Activated CD8-positive, alpha-beta memory T cell treated with anti-CD3 and anti-CD28 coated beads, Interleukin-2, amount 10 ng/mL, durations not matched to agents 7 days and 5 days (primary cell): ENCODE measurements at regions of chr19 and their contacts with region 1.

Region 1: GRCh38 chr19:35882114-35882832 is 13.9 kb downstream of the APLP1 start:
- DNase-seq: peak; percentile 53
- ATAC-seq: peak; percentile 37
- H3K4me3 Mint-ChIP-seq: no peak overlapping the region
- H3K27ac Mint-ChIP-seq: no peak overlapping the region
- H3K4me1 Mint-ChIP-seq: peaks cover 6% of the 10 kb centered on the region
- H3K27me3 Mint-ChIP-seq: peaks cover 20% of the 10 kb centered on the region

Region 2: GRCh38 chr19:35869327-35870123 is 12.7 kb before region 1 on chr19:
- CTCF ChIA-PET with region 1: interaction called, 10 read pairs
- DNase-seq: peak; percentile 93
- ATAC-seq: peak; percentile 92
- H3K4me3 Mint-ChIP-seq: peak overlapping the region; percentile 73
- H3K27ac Mint-ChIP-seq: peak overlapping the region; percentile 81
- H3K4me1 Mint-ChIP-seq: peaks cover 15% of the 10 kb centered on the region
- H3K27me3 Mint-ChIP-seq: peaks cover 21% of the 10 kb centered on the region